Caco-2 (cell line): ENCODE measurements at regions of chr3 and their contacts with region 1.

Region 1: DNA sequence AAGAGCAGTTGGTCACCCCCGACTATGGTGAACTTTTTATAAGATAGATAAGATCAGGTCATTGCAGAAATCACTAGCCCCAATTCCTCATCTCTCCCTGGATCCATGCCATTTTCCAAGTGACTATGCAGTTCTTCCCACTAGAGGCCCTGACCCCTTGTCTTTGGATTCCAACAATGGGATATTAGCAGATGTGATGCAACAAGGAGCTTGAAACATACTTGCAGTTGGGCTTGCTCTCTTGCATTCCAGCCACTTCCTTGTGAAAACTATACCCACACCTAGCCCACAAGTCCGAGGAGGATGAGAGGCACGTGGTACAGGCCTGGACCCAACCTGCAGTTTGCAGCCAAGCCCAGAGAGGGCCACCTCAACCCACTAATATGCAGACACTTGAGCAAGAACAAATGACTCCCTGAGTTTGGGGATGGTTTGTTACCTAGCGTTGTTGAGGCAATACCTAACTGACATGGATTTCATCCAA is 60.6 kb downstream of the SUCLG2 start:
- DNase-seq: peak; percentile 10 to 26
- H3K4me3 ChIP-seq: no peak overlapping the region
- H3K4me3 Mint-ChIP-seq: no peak overlapping the region
- H3K27ac Mint-ChIP-seq: no peak overlapping the region
- H3K4me1 ChIP-seq: no peaks in the 10 kb centered on the region
- H3K4me1 Mint-ChIP-seq: no peaks in the 10 kb centered on the region
- H3K27me3 ChIP-seq: no peaks in the 10 kb centered on the region
- H3K27me3 Mint-ChIP-seq: no peaks in the 10 kb centered on the region
- CTCF ChIP-seq: no peak

Region 2: DNA sequence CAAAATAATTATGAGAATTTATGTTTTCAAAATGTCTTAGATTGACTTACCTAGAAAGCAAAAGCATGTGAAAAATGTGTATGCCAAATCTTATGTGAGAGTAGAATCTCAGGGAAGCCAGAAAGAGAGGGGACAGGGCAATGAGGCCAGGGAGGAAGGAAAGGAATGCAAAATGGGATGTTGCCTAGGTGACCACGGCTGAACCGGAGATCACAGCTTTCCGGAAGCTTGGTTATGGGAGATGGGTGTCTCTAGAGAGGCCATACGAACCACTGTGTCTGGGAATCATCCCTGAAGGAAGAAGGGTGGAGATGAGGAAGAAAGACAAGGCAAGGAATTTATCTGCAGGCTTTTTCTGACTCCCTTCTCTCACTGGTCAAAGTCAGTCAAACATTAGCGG is 15.4 kb before region 1 on chr3:
- CTCF ChIA-PET with region 1: no interaction called
- POLR2A ChIA-PET with region 1: no interaction called
- intact Hi-C with region 1: no loop called
- DNase-seq: no peak
- H3K4me3 ChIP-seq: no peak overlapping the region
- H3K4me3 Mint-ChIP-seq: no peak overlapping the region
- H3K27ac Mint-ChIP-seq: no peak overlapping the region
- H3K4me1 ChIP-seq: no peaks in the 10 kb centered on the region
- H3K4me1 Mint-ChIP-seq: no peaks in the 10 kb centered on the region
- H3K27me3 ChIP-seq: no peaks in the 10 kb centered on the region
- H3K27me3 Mint-ChIP-seq: no peaks in the 10 kb centered on the region
- CTCF ChIP-seq: no peak

Region 3: DNA sequence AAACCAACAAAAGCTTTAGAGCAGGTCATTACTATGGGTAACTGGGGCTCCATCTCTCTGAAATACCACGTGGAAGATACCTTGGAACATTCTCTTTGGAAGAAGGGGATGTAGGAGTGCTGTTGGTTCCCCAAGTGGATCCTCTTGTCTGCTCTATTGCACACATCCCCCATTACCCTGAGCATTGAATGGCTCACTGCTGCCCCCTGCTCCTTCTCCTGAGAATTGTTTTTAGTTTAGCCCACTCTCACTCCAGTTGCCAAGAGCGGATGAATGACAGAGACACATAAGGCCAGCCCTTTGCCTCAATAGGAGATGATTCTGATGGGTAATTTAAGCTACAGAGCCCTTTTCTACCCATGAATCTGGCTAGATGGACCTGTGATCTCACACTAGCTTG is 196.2 kb after region 1 on chr3:
- CTCF ChIA-PET with region 1: no interaction called
- POLR2A ChIA-PET with region 1: no interaction called
- intact Hi-C with region 1: loop called (anchors 1 kb)
- DNase-seq: peak; percentile 41 to 66
- H3K4me3 ChIP-seq: no peak overlapping the region
- H3K4me3 Mint-ChIP-seq: no peak overlapping the region
- H3K27ac Mint-ChIP-seq: no peak overlapping the region
- H3K4me1 ChIP-seq: no peaks in the 10 kb centered on the region
- H3K4me1 Mint-ChIP-seq: peaks cover 9% of the 10 kb centered on the region
- H3K27me3 ChIP-seq: no peaks in the 10 kb centered on the region
- H3K27me3 Mint-ChIP-seq: peaks cover 4% of the 10 kb centered on the region
- CTCF ChIP-seq: peak; percentile 62 to 65